ENCODE measurements at regions of chr16 and their contacts with region 1.

Region 1: DNA sequence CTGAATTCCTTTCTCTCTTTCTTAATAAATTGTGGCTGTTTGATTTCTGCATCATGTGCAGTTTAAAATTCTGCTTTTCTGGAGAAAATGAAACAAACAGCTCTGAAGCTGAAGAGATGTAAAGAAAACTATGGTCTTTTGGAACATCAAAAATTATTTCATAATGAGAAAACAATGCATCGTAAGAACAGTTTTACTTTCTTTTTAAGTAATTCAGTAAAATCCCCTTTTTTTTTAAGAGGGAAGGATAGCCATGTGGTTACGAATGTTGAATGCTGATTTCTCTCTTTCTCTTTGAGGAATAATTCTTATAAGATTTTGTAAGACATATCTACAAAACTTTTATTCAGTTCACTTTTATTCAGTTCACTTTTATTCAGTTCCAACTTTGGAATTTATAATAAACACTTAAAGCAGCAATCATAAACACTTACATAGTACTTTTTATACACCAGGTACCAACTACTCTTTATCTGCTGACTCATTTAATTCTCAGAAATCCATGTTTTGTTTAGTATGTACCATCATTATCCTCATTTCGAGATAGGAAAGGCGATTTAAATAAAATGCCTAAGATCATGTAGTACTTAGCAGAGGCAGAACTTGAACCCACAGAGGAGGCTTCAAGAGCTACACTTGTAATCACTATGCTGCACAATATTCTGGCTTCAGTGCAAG is 26.6 kb downstream of the CNTNAP4 start:
- DNase-seq: no peak

Region 2: DNA sequence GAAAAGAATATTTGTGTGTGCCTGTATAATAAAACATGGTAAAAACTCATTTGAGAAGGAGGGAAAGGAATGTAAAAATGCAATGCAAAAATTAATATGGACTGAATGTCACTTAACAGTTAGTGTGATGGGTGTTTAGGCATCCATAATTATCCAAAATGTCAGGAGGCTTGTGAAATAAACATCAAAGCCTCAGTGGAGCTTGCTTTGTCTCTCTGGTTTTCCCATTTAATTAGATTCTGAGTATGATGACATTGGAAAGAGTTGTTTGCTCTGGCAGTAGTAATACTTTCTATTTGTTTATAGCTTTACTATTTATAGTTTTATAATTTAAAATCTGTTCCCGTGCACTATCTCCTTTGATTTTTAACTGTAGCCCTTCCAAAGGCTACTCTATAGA is 25.3 kb after region 1 on chr16:
- intact Hi-C with region 1: no loop called
- DNase-seq: no peak

Region 3: DNA sequence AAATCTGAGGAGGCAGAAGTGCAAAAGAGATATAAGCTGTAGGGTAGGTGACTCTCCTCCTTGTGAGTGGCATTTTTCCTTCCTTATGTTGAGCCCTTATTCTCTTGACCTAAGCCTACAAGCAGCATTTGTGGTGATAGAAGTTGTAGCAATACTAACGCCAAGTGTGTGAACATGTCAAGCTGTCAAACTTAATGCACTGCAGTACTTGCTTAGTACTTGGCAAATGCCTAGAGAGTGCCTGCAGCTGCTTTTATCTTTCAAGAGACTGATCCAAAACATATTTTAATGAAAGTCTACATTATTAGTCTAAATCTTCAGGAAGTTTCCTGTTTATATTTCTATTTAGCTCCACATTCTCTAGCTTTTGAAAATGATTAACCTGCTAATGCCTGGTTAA is 56.6 kb after region 1 on chr16:
- intact Hi-C with region 1: loop called in 1 of 2 experiments (anchors 2 kb)
- DNase-seq: no peak

Region 4: GRCh38 chr16:76668207-76668725 is 364.5 kb after region 1 on chr16:
- intact Hi-C with region 1: no loop called
- DNase-seq: no peak